Prostate gland (tissue), 2 donors: ENCODE measurements at regions of chrX and their contacts with region 1.

Region 1: GRCh38 chrX:11143931-11144678 is 33.0 kb downstream of the HCCS start:
- DNase-seq: peak; percentile 68
- H3K4me3 ChIP-seq: no peak overlapping the region
- H3K27ac ChIP-seq: no peak overlapping the region
- H3K4me1 ChIP-seq: no peaks in the 10 kb centered on the region
- H3K27me3 ChIP-seq: no peaks in the 10 kb centered on the region
- CTCF ChIP-seq: peak in 3 of 4 experiments; percentile 57 to 69 (median 63)
- POLR2A ChIP-seq: no peak

Region 2: GRCh38 chrX:11375614-11376119 is 231.6 kb after region 1 on chrX:
- intact Hi-C with region 1: loop called (anchors 10 kb)
- DNase-seq: no peak
- H3K4me3 ChIP-seq: no peak overlapping the region
- H3K27ac ChIP-seq: no peak overlapping the region
- H3K4me1 ChIP-seq: no peaks in the 10 kb centered on the region
- H3K27me3 ChIP-seq: no peaks in the 10 kb centered on the region
- CTCF ChIP-seq: no peak
- POLR2A ChIP-seq: no peak

Region 3: GRCh38 chrX:11759461-11760311 is 615.6 kb after region 1 on chrX:
- intact Hi-C with region 1: loop called (anchors 5 kb)
- DNase-seq: peak; percentile 86
- H3K4me3 ChIP-seq: peak overlapping the region; percentile 46 to 51
- H3K27ac ChIP-seq: peak overlapping the region; percentile 57 to 80
- H3K4me1 ChIP-seq: no peaks in the 10 kb centered on the region
- H3K27me3 ChIP-seq: no peaks in the 10 kb centered on the region
- CTCF ChIP-seq: peak in 1 of 4 experiments; percentile 27
- POLR2A ChIP-seq: no peak